ENCODE measurements at regions of chr7 and their contacts with region 1.

Region 1: GRCh38 chr7:124171068-124171467 is 138.2 kb upstream of the TMEM229A start:
- DNase-seq: peak; percentile 63
- H3K4me3 Mint-ChIP-seq: no peak overlapping the region
- H3K27ac Mint-ChIP-seq: no peak overlapping the region
- H3K4me1 Mint-ChIP-seq: no peaks in the 10 kb centered on the region
- H3K27me3 Mint-ChIP-seq: no peaks in the 10 kb centered on the region
- CTCF ChIP-seq: peak; percentile 66

Region 2: DNA sequence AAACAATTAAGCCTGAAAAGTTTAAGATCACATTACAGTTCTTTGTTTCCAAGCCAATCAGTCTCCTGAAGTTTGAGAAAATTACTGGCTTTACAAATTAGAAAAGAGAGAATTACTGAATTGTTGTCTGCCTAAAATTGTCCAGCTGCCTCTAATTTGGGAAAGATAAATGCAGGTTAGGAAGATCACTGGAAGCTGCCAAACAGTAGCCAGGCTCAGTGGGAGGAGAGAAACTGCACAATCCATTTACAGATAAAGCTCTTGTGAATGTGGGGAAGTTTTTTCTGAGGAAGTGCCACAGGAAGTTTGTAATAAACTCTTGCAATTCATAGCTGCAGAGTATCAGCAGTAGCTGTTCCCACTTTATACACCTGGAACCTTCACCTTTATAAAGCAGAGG is 737.4 kb before region 1 on chr7:
- CTCF ChIA-PET with region 1: no interaction called
- POLR2A ChIA-PET with region 1: no interaction called
- intact Hi-C with region 1: no loop called
- DNase-seq: no peak
- H3K4me3 Mint-ChIP-seq: no peak overlapping the region
- H3K27ac Mint-ChIP-seq: no peak overlapping the region
- H3K4me1 Mint-ChIP-seq: no peaks in the 10 kb centered on the region
- H3K27me3 Mint-ChIP-seq: no peaks in the 10 kb centered on the region
- CTCF ChIP-seq: no peak

Region 3: DNA sequence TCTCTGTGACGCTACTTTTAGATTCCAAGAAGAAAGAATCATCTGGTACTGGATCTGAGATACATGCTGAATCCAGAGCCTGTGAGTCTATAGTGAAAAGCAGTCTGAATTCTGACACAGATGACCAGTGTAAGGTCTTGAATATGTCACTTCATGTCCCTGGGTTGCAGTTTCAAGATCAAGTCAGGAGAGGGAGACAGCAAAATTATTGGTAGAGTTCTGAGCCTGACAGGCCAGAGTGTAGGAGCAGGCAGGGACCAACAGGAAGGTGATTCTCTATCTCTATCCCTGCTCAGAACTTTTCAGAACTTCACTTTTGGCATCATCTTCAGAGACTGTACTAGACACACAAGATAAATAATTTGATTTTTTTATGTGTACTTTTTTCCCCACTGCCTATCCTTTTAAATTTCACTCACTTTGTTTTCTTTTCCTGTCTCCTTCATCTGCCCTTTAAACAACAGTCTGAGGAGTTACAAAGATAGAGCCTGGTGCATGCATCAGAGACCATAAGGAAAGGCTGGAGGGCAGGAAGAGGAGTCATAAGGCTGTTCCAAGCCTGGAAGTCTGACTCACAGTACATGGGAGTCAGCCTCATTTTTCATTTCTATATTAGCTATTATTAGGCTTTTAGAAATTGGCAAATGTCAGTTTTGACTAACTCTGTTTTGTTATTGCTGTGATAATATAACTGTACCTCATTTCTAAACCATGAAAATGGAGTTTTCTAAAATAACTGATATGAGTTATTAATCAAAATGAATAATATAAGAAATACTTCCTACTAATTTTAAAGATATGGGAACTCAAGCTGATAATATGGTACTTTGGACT is 18.0 kb before region 1 on chr7:
- CTCF ChIA-PET with region 1: interaction called, 19 read pairs
- POLR2A ChIA-PET with region 1: interaction called, 3 read pairs
- intact Hi-C with region 1: no loop called
- DNase-seq: peak; percentile 62
- H3K4me3 Mint-ChIP-seq: no peak overlapping the region
- H3K27ac Mint-ChIP-seq: peak overlapping the region; percentile 75
- H3K4me1 Mint-ChIP-seq: peaks cover 9% of the 10 kb centered on the region
- H3K27me3 Mint-ChIP-seq: no peaks in the 10 kb centered on the region
- CTCF ChIP-seq: peak; percentile 29

Region 4: GRCh38 chr7:124790645-124791044 is 619.6 kb after region 1 on chr7:
- CTCF ChIA-PET with region 1: interaction called, 48 read pairs
- POLR2A ChIA-PET with region 1: no interaction called
- intact Hi-C with region 1: loop called (anchors 1 kb)
- DNase-seq: no peak
- H3K4me3 Mint-ChIP-seq: no peak overlapping the region
- H3K27ac Mint-ChIP-seq: no peak overlapping the region
- H3K4me1 Mint-ChIP-seq: no peaks in the 10 kb centered on the region
- H3K27me3 Mint-ChIP-seq: no peaks in the 10 kb centered on the region
- CTCF ChIP-seq: no peak

Measured in MCF 10A (cell line).